Right ventricle myocardium inferior (tissue), 1 donor: ENCODE measurements at regions of chr4 and their contacts with region 1.

Region 1: GRCh38 chr4:1370321-1371124 is 23.5 kb downstream of the UVSSA start:
- DNase-seq: no peak
- ATAC-seq: no peak

Region 2: DNA sequence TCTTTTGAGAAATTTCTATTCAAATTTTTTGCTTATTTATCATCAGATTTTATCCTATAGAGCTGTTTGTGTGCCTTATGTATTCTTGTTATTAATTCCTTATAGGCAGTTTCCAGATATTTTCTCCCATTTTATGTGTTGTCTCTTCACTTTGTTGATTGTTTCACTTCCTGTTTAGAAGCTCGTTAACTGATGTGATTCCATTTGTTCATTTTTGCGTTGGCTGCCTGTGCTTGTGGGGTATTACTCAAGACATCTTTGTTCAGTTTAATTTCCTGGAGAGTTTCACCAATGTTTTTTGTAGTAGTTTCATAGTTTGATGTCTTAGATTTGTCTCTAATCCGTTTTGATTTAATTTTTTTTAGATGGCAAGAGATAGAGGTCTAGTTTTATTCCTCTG is 1231.6 kb before region 1 on chr4:
- intact Hi-C with region 1: no loop called
- DNase-seq: no peak
- ATAC-seq: no peak

Region 3: GRCh38 chr4:1130316-1131186 is 240.0 kb before region 1 on chr4:
- intact Hi-C with region 1: no loop called
- DNase-seq: peak; percentile 72
- ATAC-seq: peak; percentile 91

Region 4: DNA sequence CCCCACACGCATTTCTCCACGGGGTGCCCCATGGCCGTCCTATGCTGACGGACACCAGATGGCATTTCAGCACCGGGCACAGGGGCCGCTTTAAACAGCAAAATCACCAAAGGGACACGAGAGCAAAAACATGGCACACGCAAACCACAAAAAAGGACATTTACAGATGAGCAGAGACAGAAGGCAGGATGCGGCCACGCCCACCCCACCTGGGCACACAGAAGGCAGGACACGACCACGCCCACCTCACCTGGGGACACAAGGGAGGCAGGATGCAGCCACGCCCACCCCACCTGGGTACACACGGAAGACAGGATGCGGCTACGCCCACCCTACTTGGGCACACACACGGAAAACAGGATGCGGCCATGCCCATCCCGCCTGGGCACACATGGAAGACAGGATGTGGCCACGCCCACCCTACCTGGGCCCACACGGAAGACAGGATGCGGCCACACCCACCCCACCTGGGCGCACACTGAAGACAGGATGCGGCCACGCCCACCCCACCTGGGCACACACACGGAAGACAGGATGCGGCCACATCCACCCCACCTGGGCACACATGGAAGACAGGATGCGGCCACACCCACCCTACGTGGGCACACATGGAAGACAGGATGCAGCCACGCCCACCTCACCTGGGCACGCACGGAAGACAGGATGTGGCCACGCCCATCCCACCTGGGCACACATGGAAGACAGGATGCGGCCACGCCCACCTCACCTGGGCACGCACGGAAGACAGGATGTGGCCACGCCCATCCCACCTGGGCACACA is 244.5 kb after region 1 on chr4:
- intact Hi-C with region 1: loop called (anchors 5 kb)
- DNase-seq: no peak
- ATAC-seq: no peak